Ascending aorta (tissue), 2 donors: ENCODE measurements at regions of chr16 and their contacts with region 1.

Region 1: GRCh38 chr16:67159593-67160406 is at the starts of genes FBXL8 and TRADD:
- DNase-seq: peak in 1 of 2 donors; percentile 85
- H3K4me3 ChIP-seq: peak within 1 kb of the TSS; percentile 82 to 89
- H3K27ac ChIP-seq: peak within 1 kb of the TSS; percentile 68 to 80
- H3K4me1 ChIP-seq: peaks cover 13 to 41% of the 10 kb centered on the region in 2 donors
- H3K27me3 ChIP-seq: no peaks in the 10 kb centered on the region
- CTCF ChIP-seq: peak; percentile 27 to 39 (median 34)
- total RNA-seq, gene FBXL8: 46.1 TPM
- total RNA-seq, gene TRADD: 27.7 TPM

Region 2: DNA sequence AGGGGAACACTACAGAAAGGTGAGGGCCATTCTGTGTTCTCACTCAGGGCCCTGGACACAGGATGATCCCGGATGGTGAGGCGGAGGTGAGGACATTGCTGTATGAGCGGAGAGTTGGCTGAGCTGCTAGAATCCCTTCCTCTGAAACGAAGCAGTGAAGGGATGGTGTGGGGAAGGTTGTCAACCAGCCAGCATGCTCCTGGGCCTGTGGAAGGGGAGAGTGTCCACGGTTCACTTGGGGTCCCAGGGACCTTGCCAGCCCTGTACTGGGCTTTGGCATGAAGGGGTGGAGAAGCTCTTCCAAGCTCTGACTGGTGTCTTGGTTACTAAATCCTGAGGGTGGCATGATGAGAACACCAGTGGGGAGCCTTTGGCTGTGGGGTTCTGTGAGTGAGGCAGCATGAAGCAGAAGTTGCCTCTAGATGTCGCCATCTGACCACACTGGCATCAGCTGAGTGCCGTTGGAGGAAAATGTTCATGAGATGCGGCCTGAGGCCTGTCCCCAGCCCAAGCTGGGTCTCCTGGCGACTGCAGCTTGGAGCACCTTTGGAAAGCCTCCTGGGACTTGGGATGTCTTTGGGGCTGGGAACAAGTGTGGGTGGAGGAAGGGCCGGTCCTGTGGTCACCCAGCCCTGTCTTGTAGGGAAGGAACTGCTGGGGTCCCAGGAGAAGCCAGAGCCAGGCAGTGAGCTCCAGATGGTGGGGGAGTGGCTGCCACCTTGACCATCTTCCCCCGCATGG is 264.7 kb before region 1 on chr16:
- intact Hi-C with region 1: loop called (anchors 2 kb)
- DNase-seq: peak in 1 of 2 donors; percentile 85
- H3K4me3 ChIP-seq: no peak overlapping the region
- H3K27ac ChIP-seq: peak overlapping the region; percentile 40 to 54
- H3K4me1 ChIP-seq: peaks cover 16 to 39% of the 10 kb centered on the region in 2 donors
- H3K27me3 ChIP-seq: no peaks in the 10 kb centered on the region
- CTCF ChIP-seq: peak; percentile 86 to 93 (median 88)

Region 3: DNA sequence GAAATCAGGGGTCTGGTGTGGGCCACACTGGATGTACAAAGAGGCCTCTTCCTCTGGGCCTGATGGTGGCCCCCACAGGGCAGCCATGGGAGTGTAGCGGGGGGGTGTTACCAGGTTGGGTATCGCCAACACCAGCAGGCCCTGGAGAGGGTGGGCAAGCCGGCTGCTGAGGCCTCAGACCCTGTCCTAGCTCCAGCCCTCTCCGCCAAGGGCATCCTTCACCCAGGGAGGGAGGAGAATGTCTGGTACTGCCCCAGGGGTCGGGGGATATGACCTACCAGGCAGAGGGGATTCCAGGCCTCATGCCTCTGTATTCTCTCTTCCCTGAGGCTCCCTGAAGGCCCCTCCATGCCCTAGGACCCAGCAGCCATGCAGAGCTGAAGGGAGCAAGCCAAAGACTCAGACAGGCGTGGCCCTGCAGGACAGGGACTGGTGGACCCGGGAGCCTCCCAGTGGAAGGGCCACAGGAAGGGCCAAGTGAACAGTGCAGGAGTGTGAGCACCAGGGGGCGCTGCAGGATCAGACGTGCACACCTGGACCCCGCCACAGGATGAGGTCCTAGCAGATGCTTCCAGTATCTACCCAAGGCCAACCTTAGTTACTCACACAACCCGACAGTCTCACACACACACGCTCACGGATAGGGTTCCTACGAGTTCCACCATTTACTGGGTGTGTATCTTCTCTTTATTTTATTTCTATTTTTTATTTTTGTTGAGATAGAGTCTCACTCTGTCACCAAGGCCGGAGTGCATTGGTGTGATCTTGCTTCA is 182.3 kb before region 1 on chr16:
- intact Hi-C with region 1: loop called (anchors 1 kb)
- DNase-seq: peak; percentile 35 to 92
- H3K4me3 ChIP-seq: no peak overlapping the region
- H3K27ac ChIP-seq: no peak overlapping the region
- H3K4me1 ChIP-seq: peaks cover 0 to 7% of the 10 kb centered on the region in 2 donors
- H3K27me3 ChIP-seq: no peaks in the 10 kb centered on the region
- CTCF ChIP-seq: peak; percentile 95 to 99 (median 97)

Region 4: GRCh38 chr16:67000384-67001351 is 159.1 kb before region 1 on chr16:
- intact Hi-C with region 1: loop called (anchors 5 kb)
- DNase-seq: peak; percentile 33 to 83
- H3K4me3 ChIP-seq: peak overlapping the region; percentile 54 to 65
- H3K27ac ChIP-seq: peak overlapping the region; percentile 65 to 72
- H3K4me1 ChIP-seq: peaks cover 4 to 27% of the 10 kb centered on the region in 2 donors
- H3K27me3 ChIP-seq: no peaks in the 10 kb centered on the region
- CTCF ChIP-seq: no peak

Region 5: GRCh38 chr16:67028555-67029248 is 131.1 kb before region 1 on chr16 and contains the start of gene CBFB:
- intact Hi-C with region 1: loop called (anchors 5 kb)
- DNase-seq: peak; percentile 78 to 95
- H3K4me3 ChIP-seq: peak within 1 kb of the TSS; percentile 98 to 100
- H3K27ac ChIP-seq: peak within 1 kb of the TSS; percentile 98 to 99
- H3K4me1 ChIP-seq: peaks cover 8 to 20% of the 10 kb centered on the region in 2 donors
- H3K27me3 ChIP-seq: no peaks in the 10 kb centered on the region
- CTCF ChIP-seq: peak in 1 of 3 experiments; percentile 27
- total RNA-seq, gene CBFB: 59.1 TPM

Region 6: GRCh38 chr16:67137605-67138004 is 22.2 kb before region 1 on chr16:
- intact Hi-C with region 1: no loop called
- DNase-seq: no peak
- H3K4me3 ChIP-seq: no peak overlapping the region
- H3K27ac ChIP-seq: no peak overlapping the region
- H3K4me1 ChIP-seq: no peaks in the 10 kb centered on the region
- H3K27me3 ChIP-seq: no peaks in the 10 kb centered on the region
- CTCF ChIP-seq: no peak

Region 7: DNA sequence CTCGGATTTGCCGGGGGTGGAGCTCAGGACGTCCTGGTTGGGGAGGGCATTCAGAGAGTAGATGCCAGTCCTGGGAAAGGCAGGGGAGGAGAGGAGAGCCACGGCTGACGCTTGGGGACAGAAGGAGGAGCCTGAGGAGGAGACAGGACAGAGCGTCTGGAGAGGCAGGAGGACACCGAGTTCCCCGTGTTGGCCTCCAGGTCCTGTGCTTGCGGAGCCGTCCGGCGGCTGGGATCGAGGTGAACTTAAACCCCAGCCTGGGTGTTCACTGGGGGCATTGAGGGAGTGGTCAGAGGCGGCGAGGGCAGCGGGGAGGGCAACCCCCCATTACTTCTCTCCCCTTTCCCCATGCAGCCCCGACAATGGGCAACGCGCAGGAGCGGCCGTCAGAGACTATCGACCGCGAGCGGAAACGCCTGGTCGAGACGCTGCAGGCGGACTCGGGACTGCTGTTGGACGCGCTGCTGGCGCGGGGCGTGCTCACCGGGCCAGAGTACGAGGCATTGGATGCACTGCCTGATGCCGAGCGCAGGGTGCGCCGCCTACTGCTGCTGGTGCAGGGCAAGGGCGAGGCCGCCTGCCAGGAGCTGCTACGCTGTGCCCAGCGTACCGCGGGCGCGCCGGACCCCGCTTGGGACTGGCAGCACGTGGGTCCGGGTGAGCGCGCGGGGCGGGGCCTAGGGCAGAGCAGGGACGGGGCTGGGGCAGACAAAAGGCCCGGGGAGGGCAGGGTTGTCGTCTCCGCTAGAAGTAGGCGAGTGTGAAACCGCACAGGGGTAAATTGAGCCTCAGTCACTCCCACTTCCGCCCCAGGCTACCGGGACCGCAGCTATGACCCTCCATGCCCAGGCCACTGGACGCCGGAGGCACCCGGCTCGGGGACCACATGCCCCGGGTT is 14.3 kb after region 1 on chr16:
- intact Hi-C with region 1: loop called (anchors 1 kb)
- DNase-seq: peak; percentile 84 to 96
- H3K4me3 ChIP-seq: peak overlapping the region; percentile 49 to 67
- H3K27ac ChIP-seq: peak overlapping the region; percentile 93 to 95
- H3K4me1 ChIP-seq: peaks cover 24 to 41% of the 10 kb centered on the region in 2 donors
- H3K27me3 ChIP-seq: no peaks in the 10 kb centered on the region
- CTCF ChIP-seq: peak; percentile 19 to 48 (median 34)

Region 8: GRCh38 chr16:67183627-67184328 is 24.0 kb after region 1 on chr16 and contains the start of gene MATCAP1:
- intact Hi-C with region 1: loop called (anchors 1 kb)
- DNase-seq: peak; percentile 90 to 98
- H3K4me3 ChIP-seq: peak within 1 kb of the TSS; percentile 74 to 76
- H3K27ac ChIP-seq: peak within 1 kb of the TSS; percentile 92 to 96
- H3K4me1 ChIP-seq: peaks cover 15 to 21% of the 10 kb centered on the region in 2 donors
- H3K27me3 ChIP-seq: no peaks in the 10 kb centered on the region
- CTCF ChIP-seq: no peak
- total RNA-seq, gene MATCAP1: 18.9 TPM